ENCODE measurements at regions of chr11 and their contacts with region 1.

Region 1: DNA sequence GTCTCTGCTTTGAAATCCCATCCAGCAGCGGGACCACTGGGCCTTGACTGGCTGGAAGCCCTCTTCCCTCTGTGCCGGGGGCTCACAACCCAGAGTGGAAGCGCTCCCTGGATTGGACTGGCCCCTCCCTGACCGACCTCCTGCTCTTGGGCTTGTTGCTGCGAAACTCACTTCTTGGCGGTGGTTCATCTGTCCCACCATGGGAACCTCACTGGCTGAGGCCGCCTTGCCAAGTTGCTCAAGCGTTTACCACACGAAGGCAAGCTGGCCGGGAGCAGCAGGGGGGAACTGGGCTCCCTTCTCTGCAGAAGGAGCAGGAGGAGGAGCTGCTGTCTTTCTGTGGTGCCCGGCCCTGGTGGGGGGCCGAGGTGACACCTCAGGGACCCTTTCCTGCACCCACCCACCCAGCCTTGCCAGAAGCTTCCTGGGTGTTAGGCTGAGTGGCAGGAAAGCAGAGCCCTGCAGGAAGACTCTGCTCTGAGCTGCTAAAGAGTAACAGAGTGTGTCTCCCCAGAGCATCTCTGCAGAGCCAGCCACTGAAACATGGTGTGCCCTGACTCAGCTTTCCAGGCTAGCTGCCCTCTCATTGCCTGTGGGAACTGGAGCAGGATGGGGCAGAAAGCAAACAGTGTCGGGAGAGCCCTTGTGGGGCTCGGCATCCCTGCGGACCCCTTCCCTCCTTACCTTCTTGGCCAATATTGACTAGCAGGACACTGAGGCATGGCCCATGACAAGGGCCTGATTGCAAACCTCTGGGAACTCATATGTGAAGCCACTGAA is 88.5 kb upstream of the ALX4 start:
- DNase-seq: no peak
- ATAC-seq: no peak
- H3K4me3 Mint-ChIP-seq: no peak overlapping the region
- H3K27ac Mint-ChIP-seq: no peak overlapping the region
- H3K4me1 Mint-ChIP-seq: no peaks in the 10 kb centered on the region
- H3K27me3 Mint-ChIP-seq: peaks cover 19% of the 10 kb centered on the region

Region 2: GRCh38 chr11:44267750-44268613 is 130.5 kb before region 1 on chr11:
- CTCF ChIA-PET with region 1: no interaction called
- POLR2A ChIA-PET with region 1: no interaction called
- intact Hi-C with region 1: no loop called
- DNase-seq: no peak
- ATAC-seq: no peak
- H3K4me3 Mint-ChIP-seq: no peak overlapping the region
- H3K27ac Mint-ChIP-seq: no peak overlapping the region
- H3K4me1 Mint-ChIP-seq: no peaks in the 10 kb centered on the region
- H3K27me3 Mint-ChIP-seq: peaks cover 4% of the 10 kb centered on the region

Region 3: GRCh38 chr11:44326615-44327475 is 71.6 kb before region 1 on chr11:
- CTCF ChIA-PET with region 1: no interaction called
- POLR2A ChIA-PET with region 1: no interaction called
- intact Hi-C with region 1: no loop called
- DNase-seq: no peak
- ATAC-seq: no peak
- H3K4me3 Mint-ChIP-seq: no peak overlapping the region
- H3K27ac Mint-ChIP-seq: no peak overlapping the region
- H3K4me1 Mint-ChIP-seq: no peaks in the 10 kb centered on the region
- H3K27me3 Mint-ChIP-seq: peaks cover 57% of the 10 kb centered on the region

Region 4: DNA sequence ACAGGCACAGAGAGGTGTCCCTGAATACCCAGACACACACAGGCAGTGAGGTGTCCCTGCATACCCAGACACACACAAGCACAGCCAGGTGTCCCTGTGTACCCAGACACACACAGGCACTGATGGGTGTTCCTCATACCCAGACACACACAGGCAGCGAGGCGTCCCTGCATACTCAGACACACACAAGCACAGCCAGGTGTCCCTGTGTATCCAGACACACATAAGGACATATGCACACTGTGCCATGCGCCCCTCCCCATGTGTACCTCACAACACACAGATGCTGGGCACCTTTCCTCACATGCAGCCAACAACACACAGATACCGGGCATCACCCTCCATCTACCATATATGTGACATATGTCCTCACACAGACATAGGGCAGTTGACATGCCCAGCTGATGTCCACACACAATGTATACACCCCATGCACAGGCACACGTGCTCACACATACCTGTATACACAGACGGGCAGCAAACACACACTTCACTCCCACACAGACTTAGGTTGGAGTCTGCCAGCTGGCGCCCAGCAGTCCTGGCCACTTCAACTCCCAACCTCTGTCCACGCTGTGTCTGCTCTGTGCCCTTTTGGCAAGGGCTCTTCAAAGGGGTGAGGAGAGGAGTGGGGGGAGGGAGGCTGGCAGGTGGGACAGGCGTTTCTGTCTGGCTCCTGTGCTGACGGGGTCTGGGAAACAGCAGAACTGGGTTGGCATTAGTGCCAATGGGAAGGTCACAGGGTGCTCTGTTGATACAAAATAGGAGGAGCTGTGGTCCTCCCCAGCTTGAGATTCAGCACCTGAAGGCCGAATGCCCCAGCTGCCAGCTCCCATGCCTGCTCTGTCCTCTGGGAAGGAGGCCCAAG is 19.1 kb before region 1 on chr11:
- CTCF ChIA-PET with region 1: no interaction called
- POLR2A ChIA-PET with region 1: no interaction called
- intact Hi-C with region 1: loop called in 1 of 2 experiments (anchors 2 kb)
- DNase-seq: no peak
- ATAC-seq: no peak
- H3K4me3 Mint-ChIP-seq: no peak overlapping the region
- H3K27ac Mint-ChIP-seq: no peak overlapping the region
- H3K4me1 Mint-ChIP-seq: no peaks in the 10 kb centered on the region
- H3K27me3 Mint-ChIP-seq: peaks cover 5% of the 10 kb centered on the region

Measured in activated CD4-positive, alpha-beta T cell treated with anti-CD3 and anti-CD28 coated beads for 36 hours (primary cell).